ENCODE measurements at regions of chr6 and their contacts with region 1.

Region 1: DNA sequence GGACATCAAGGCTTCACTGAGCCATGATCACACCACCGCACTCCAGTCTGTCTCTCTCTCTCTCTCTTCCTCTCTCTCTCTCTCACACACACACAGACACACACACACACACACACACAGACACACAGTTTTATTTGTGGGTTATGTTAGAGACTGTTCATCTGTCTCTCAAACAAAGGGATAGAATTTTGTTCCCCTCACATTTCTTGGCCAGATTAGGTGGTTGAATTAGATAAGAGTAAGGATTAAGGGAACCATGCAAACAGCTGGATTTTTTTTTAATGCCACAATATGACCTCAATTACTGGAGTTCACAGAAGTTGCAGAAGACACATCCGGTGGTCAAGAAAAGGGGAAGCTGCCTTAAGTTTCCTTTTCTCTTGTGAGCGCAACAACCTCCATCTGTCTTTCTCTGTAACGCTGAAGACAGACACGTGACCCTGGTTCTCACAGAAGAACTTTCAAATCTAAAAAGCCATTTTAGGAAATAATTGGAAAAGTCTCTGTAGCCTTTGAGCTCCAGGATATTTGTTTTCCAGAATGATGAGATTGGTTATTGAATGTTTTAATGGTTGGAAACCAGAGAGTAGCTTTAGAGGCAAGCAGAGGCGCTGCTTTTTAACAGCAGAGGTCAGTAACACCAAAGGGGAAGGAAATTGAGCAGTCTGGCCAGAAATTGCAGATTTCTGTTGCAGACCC is 33.0 kb upstream of the LGSN start:
- DNase-seq: peak; percentile 36
- ATAC-seq: peak; percentile 75
- H3K4me3 ChIP-seq: no peak overlapping the region
- H3K27ac ChIP-seq: no peak overlapping the region
- H3K4me1 ChIP-seq: peaks cover 0 to 31% of the 10 kb centered on the region in 2 experiments; a peak in 2 of 4 replicates
- H3K27me3 ChIP-seq: no peaks in the 10 kb centered on the region
- CTCF ChIP-seq: peak; percentile 59 to 82 (median 73)
- POLR2A ChIP-seq: no peak
- RAD21 ChIP-seq: peak; percentile 94

Region 2: DNA sequence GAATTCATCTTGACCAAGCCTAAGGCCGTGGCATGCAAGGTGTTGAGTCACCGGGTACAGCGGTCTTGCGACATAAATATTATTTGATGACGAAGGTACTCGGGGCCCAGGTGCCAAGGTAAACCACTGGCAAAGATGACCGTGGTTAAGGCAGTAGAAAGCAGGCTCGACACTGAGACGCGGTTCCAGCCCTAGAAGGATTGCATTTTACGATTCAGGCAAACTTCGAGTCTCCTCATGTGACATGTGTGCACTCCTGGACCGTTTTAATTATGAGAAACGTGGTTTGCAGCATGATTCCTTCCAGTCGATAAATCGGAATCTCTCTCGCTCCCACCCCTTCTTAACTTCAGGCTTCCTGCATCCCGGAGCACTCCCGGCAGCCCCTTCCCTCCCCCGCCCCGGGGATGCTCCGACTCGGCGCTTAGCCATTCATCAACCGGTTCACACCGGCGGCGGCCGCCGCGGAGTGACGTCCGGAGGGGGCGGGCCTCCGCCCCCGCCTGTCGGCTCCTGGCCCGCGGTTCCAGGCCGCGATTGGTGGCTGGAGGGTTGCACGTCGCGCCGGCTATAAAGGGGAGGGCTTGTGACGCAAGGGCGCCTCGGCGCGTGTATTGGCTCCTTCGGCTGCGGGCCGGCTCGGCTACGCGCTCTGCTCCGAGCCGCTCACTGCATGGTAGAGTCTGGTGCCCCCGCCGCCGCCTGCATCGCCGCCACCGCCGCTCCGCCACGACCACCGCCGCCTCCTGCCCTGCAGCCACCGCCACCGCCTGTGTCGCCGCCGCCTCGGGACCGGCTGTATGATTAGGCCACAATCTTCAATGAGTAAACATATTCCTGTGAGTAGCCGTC is 219.4 kb after region 1 on chr6 and contains the starts of genes LOC128125822 and PTP4A1:
- CTCF ChIA-PET with region 1: interaction called, 22 read pairs
- POLR2A ChIA-PET with region 1: interaction called, 5 read pairs
- RAD21 ChIA-PET with region 1: interaction called in 1 of 2 experiments, 3 read pairs
- intact Hi-C with region 1: loop called (anchors 1 kb)
- DNase-seq: peak; percentile 92
- ATAC-seq: peak; percentile 87
- H3K4me3 ChIP-seq: peak within 1 kb of the TSS; percentile 69 to 79
- H3K27ac ChIP-seq: peak within 1 kb of the TSS; percentile 98
- H3K4me1 ChIP-seq: peaks cover 12 to 41% of the 10 kb centered on the region in 2 experiments
- H3K27me3 ChIP-seq: no peaks in the 10 kb centered on the region
- CTCF ChIP-seq: no peak; a peak in 1 of 6 replicates
- POLR2A ChIP-seq: peak; percentile 51
- RAD21 ChIP-seq: no peak; the same call in 1 of the 2 replicates
- total RNA-seq, gene PTP4A1: 123 TPM

Region 3: DNA sequence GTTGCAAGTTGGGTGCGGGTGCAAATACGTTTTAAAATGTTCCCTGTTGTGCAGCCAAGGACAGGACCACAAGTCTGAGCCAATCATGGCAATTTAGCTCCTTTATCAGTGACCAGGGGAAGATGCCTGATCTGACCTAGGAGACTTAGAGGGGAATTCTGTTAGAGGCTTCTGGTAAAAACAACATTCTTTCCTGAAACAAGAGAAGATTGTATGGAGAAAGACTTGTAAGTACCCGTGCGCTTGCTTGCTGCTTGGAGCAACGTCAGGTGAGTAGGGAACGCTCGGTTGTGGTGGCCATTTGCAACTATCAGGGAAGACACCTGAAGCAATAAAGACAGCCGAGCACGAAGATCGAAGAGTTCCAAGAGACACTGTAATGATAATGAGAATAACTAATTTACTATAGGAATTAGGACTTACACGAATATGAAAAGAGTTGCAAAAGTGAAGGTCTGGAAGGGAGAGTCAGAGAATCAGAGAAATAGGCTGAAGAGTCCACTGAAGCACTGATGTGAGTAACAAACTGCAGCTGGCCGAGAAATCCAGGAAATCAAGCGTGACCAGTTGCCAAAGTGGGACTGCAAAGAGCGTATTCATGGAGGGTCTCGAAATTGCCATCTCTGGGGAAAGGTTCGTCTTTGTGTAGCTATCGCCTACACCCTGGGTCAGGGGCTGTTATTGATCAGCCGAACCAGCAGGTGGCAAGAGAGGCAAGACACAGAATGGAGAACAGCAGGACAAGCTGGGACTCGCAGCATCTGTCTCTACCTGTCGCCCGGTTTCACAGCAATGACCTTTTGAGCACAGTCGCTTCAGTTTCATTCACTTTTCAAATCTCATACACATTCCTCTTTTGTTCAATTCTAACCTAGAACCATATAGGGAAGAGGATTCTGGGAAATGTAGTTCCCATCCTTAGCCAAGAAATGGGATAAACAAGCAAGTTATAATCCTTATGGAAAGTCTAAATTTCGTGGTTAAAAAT is 245.6 kb after region 1 on chr6:
- CTCF ChIA-PET with region 1: interaction called, 15 read pairs
- POLR2A ChIA-PET with region 1: no interaction called
- RAD21 ChIA-PET with region 1: no interaction called
- intact Hi-C with region 1: loop called (anchors 1 kb)
- DNase-seq: peak; percentile 51
- ATAC-seq: peak; percentile 99
- H3K4me3 ChIP-seq: no peak overlapping the region
- H3K27ac ChIP-seq: no peak overlapping the region
- H3K4me1 ChIP-seq: peaks cover 0 to 4% of the 10 kb centered on the region in 2 experiments; a peak in 1 of 4 replicates
- H3K27me3 ChIP-seq: no peaks in the 10 kb centered on the region
- CTCF ChIP-seq: peak; percentile 35 to 80 (median 78); a peak in 5 of 6 replicates
- POLR2A ChIP-seq: no peak
- RAD21 ChIP-seq: peak; percentile 63

Region 4: GRCh38 chr6:63773200-63773599 is 420.5 kb after region 1 on chr6:
- CTCF ChIA-PET with region 1: interaction called, 15 read pairs
- POLR2A ChIA-PET with region 1: no interaction called
- RAD21 ChIA-PET with region 1: no interaction called
- intact Hi-C with region 1: no loop called
- DNase-seq: no peak
- ATAC-seq: no peak
- H3K4me3 ChIP-seq: no peak overlapping the region
- H3K27ac ChIP-seq: no peak overlapping the region
- H3K4me1 ChIP-seq: no peaks in the 10 kb centered on the region
- H3K27me3 ChIP-seq: no peaks in the 10 kb centered on the region
- CTCF ChIP-seq: no peak
- POLR2A ChIP-seq: no peak
- RAD21 ChIP-seq: no peak